Left lung (tissue), 14 donors: ENCODE measurements at regions of chr11 and their contacts with region 1.

Region 1: DNA sequence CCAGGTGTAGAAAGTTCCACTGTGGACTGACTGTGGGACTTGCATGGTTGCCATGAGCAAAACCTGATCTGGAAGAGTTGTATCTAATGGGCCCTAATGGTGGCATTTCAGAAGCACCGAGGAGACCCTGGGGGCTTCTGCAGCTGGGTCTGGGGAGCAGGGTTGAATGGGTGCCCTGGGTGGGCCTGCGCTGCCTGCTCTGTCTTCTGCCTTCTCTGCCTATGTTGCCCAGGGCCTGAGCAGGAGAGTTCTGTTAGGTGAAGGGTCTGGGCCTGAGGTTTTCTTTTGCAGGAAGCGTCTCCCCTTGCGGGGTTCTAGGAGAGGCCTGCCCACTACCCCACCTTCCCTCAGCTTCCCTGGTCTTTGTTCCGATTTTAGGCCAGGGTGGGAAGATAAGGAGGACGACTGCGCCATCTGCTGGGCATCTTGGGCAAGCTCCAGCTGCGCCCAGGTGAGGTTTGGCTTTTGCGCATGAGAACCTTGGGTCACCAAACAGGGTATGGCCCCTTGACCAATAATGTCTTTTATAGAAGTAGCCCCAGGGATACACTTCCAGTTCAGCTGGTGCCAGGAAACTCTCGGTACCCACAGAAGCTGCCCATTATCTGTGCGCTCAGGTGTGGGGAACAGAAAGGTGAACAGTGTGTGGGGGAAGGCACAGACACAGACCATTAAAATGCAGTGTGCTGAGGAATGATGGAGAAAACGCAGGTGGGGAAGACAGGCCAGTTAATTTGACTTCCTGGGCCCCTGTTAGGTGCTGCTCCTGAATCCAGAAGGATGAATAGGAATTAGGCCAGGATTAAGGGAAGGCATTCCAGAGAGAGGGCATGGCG is 23.2 kb downstream of the COMMD9 start:
- DNase-seq: peak in 3 of 4 donors; percentile 33 to 82 (median 58)
- ATAC-seq: peak; percentile 90
- H3K4me3 ChIP-seq: no peak overlapping the region
- H3K27ac ChIP-seq: no peak overlapping the region
- H3K4me1 ChIP-seq: no peaks in the 10 kb centered on the region
- H3K27me3 ChIP-seq: peaks cover 0 to 12% of the 10 kb centered on the region in 2 donors
- CTCF ChIP-seq: peak; percentile 74 to 86

Region 2: DNA sequence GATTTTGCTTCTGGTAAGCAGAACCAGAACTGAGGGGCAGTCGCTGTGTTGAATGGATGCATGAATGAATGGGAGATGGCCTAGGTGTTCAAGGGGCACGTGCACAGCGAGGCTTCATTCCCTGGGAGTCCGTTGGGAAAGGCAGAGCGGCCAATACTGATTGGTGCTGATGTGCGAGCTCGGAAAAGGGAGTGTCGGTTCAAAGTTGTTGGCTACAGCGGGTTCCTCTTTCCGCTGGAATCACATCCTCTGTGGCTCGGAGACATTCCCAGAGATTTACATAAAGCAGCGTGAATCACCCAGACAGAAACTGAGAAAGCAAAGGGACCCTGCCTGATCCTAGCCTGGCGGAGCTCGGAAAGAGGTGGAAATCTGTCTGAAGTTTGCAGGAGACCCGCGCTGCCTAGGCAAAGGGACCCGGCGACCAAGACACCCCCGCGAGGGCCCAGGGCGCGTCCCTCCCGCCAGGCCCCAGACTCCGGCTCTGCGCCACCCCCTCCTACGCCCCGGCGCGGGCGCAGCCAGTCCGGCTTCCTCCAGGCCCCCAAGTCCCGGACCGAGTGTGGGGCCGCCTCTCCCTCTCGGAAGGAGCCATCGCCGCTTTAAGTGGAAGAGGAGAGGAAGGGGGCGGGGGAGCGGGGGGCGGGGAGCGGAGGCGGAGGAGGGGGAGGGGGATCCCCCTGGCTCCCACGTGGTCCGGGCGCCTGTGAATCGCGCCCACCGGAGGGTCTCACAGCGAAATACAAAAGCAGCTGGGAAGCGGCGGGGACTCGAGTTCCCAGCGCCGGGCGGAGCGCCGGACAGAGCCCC is 648.1 kb before region 1 on chr11 and contains the start of gene FJX1:
- intact Hi-C with region 1: loop called in 1 of 2 experiments (anchors 5 kb)
- DNase-seq: peak; percentile 52 to 80 (median 64)
- ATAC-seq: peak; percentile 66
- H3K4me3 ChIP-seq: peak within 1 kb of the TSS; percentile 53 to 54
- H3K27ac ChIP-seq: peak within 1 kb of the TSS; percentile 76 to 83
- H3K4me1 ChIP-seq: peaks cover 12 to 35% of the 10 kb centered on the region in 2 donors
- H3K27me3 ChIP-seq: peaks cover 16 to 64% of the 10 kb centered on the region in 2 donors
- CTCF ChIP-seq: no peak
- polyA plus RNA-seq, gene FJX1: 3.9 to 6.0 (median 4.7) TPM

Region 3: GRCh38 chr11:35815556-35816315 is 450.3 kb before region 1 on chr11:
- intact Hi-C with region 1: loop called in 1 of 2 experiments (anchors 10 kb)
- DNase-seq: peak in 1 of 4 donors; percentile 55
- ATAC-seq: peak; percentile 54
- H3K4me3 ChIP-seq: no peak overlapping the region
- H3K27ac ChIP-seq: no peak overlapping the region
- H3K4me1 ChIP-seq: no peaks in the 10 kb centered on the region
- H3K27me3 ChIP-seq: no peaks in the 10 kb centered on the region
- CTCF ChIP-seq: no peak

Region 4: GRCh38 chr11:36041988-36042611 is 223.9 kb before region 1 on chr11:
- intact Hi-C with region 1: loop called in 1 of 2 experiments (anchors 10 kb)
- DNase-seq: no peak
- ATAC-seq: peak; percentile 52
- H3K4me3 ChIP-seq: no peak overlapping the region
- H3K27ac ChIP-seq: no peak overlapping the region
- H3K4me1 ChIP-seq: no peaks in the 10 kb centered on the region
- H3K27me3 ChIP-seq: no peaks in the 10 kb centered on the region
- CTCF ChIP-seq: peak; percentile 35 to 49

Region 5: GRCh38 chr11:36149538-36150242 is 116.3 kb before region 1 on chr11:
- intact Hi-C with region 1: loop called in 1 of 2 experiments (anchors 10 kb)
- DNase-seq: peak in 2 of 4 donors; percentile 68 to 78
- ATAC-seq: peak; percentile 94
- H3K4me3 ChIP-seq: no peak overlapping the region
- H3K27ac ChIP-seq: peak overlapping the region; percentile 53 to 76
- H3K4me1 ChIP-seq: peaks cover 4 to 23% of the 10 kb centered on the region in 2 donors
- H3K27me3 ChIP-seq: no peaks in the 10 kb centered on the region
- CTCF ChIP-seq: peak; percentile 27 to 36